HEK293 (cell line): ENCODE measurements at regions of chr21 and their contacts with region 1.

Region 1: DNA sequence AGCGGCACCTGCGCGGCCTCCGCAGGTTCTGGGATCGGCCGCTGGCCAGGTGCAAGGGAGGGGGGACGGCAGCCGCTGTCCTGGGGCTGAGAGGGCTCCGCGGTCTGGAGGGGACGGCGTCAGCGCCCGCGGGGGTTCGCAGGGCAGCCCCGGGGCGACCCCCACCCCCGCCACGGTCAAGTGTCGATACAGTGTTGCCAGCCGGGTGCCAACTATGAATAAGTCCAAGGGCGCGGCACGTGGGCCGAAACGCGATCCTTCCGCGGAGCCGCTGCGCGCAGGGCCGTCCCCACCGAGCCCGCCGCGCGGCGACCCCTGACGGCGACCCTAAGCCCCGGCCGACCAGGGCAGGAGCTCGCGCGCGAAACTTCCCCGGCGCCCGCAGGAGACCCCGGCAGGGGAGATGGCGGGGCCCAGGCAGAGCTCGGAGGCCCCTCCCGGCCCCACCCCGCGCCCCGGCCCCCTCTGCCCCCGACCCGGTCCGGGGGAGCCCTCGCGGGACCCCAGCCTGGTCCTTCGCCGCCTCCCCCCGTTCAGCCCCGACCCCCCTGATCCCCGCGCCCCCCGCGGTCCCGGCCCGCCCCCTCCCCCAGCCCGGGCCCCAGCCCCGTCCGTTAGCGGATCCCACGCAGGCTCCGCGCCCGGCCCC is 586 bp upstream of the AGPAT3 start:
- H3K4me3 ChIP-seq: peak overlapping the region; percentile 55
- H3K27ac ChIP-seq: peak overlapping the region; percentile 72; the same call in 1 of the 2 replicates
- H3K4me1 ChIP-seq: peaks cover 10% of the 10 kb centered on the region
- CTCF ChIP-seq: 0 out of 2 replicates have a peak, but pooled peaks have one; percentile 39

Region 2: DNA sequence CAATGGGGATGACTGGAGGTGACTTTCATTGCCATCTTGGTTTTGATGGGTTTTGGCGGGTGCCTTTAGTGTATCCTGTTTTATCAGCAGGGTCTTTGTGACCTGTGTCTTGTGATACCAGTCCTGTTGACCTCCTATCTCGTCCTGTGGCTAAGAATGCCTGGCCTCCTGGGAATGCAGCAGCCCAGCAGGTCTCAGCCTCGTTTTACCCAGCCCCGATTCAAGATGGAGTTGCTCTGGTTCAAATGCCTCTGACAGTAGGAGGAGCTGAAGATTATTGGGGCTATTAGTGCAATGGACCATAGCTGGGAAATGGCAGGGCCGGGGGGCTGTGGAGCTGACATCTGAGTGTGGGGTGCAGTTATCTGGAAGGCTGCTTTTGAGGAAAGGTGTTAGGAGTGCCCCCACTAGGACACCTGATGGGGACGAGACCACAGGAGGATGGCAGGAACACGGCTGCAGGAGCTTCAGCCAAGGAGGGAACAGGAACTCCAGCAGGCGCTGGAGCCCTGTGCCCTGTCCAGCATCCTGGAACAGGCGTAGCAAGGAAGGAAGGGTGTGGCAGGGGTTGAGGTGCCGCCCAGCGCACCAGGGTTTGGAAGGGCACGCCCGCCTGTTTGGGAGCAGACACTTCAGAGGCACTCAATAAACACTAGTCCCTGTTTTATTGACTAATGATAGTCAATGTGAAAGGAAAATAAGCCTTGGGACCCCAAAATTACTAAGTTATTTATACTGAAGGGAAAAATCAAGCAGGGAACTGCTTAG is 14.7 kb before region 1 on chr21:
- CTCF ChIA-PET with region 1: no interaction called
- POLR2A ChIA-PET with region 1: no interaction called
- H3K4me3 ChIP-seq: no peak overlapping the region
- H3K27ac ChIP-seq: no peak overlapping the region
- H3K4me1 ChIP-seq: no peaks in the 10 kb centered on the region
- CTCF ChIP-seq: no peak

Region 3: GRCh38 chr21:43884012-43884860 is 19.8 kb after region 1 on chr21:
- CTCF ChIA-PET with region 1: no interaction called
- POLR2A ChIA-PET with region 1: interaction called, 14 read pairs
- H3K4me3 ChIP-seq: no peak overlapping the region
- H3K27ac ChIP-seq: peak overlapping the region; percentile 67
- H3K4me1 ChIP-seq: peaks cover 11% of the 10 kb centered on the region
- CTCF ChIP-seq: no peak